SK-N-SH (cell line): ENCODE measurements at regions of chr11 and their contacts with region 1.

Region 1: GRCh38 chr11:128172046-128172878 is 415.1 kb downstream of the ETS1 start:
- DNase-seq: peak; percentile 73
- H3K4me3 ChIP-seq: no peak overlapping the region; a peak in 1 of 4 replicates
- H3K27ac ChIP-seq: peak overlapping the region in 1 of 2 experiments; percentile 50; a peak in 2 of 4 replicates
- H3K4me1 ChIP-seq: peaks cover 3 to 5% of the 10 kb centered on the region in 2 experiments; a peak in 2 of 4 replicates
- H3K27me3 ChIP-seq: no peaks in the 10 kb centered on the region
- CTCF ChIP-seq: peak; percentile 87
- EP300 ChIP-seq: no peak
- RAD21 ChIP-seq: peak; percentile 98

Region 2: DNA sequence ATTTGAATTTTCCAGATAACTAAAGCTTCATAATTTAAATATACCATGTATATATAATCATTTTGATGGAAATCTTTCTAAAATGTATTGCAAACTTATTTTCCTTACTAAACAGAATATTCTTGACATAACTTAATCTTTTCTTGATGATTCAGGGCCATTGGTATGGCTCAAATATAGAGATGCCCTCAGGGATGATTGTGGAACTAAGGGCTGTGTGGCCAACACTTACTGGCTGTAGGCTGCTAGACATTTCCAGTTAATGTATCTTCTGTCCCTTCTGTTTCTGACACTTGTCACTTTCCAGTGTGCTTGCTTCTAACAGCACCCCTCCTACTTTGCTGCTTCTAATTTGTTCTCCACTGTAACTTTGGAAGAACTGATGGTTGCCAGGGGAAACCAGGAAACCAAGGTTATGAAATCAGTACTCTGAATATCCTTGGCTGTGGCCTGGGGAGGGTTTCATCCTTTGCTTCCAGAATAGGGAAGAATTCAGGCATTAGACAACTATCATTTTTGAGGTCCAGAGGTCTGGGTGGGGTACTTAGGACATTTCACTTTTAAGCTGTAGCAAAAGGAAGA is 282.1 kb before region 1 on chr11:
- CTCF ChIA-PET with region 1: no interaction called
- POLR2A ChIA-PET with region 1: no interaction called
- DNase-seq: no peak
- H3K4me3 ChIP-seq: no peak overlapping the region
- H3K27ac ChIP-seq: no peak overlapping the region
- H3K4me1 ChIP-seq: no peaks in the 10 kb centered on the region
- H3K27me3 ChIP-seq: no peaks in the 10 kb centered on the region
- CTCF ChIP-seq: no peak
- EP300 ChIP-seq: no peak
- RAD21 ChIP-seq: no peak

Region 3: GRCh38 chr11:128095466-128095981 is 76.7 kb before region 1 on chr11:
- CTCF ChIA-PET with region 1: no interaction called
- POLR2A ChIA-PET with region 1: no interaction called
- DNase-seq: no peak
- H3K4me3 ChIP-seq: no peak overlapping the region
- H3K27ac ChIP-seq: peak overlapping the region in 1 of 2 experiments; percentile 53; a peak in 2 of 4 replicates
- H3K4me1 ChIP-seq: no peaks in the 10 kb centered on the region
- H3K27me3 ChIP-seq: no peaks in the 10 kb centered on the region
- CTCF ChIP-seq: peak; percentile 30; the same call in 1 of the 2 replicates
- EP300 ChIP-seq: no peak
- RAD21 ChIP-seq: no peak

Region 4: DNA sequence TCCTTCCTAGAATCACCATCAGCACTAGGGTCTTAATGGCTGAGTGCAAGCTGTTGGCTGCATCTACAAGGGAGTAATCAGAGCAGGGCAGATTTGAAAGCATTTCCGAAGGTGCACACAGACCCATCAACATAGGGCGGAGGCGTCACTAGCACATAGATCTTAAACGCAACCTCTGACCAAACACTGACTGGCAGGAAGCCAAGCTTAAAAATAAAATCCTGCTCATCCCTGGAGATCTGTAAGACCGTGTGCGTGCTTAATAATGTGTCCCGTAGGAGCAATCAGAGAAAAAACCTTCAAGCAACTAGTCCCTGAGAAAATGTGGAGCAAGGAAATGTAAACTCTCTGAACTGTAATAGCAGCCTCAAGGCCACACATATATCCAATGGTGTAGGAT is 55.4 kb before region 1 on chr11:
- CTCF ChIA-PET with region 1: no interaction called
- POLR2A ChIA-PET with region 1: no interaction called
- DNase-seq: no peak
- H3K4me3 ChIP-seq: no peak overlapping the region
- H3K27ac ChIP-seq: no peak overlapping the region
- H3K4me1 ChIP-seq: no peaks in the 10 kb centered on the region
- H3K27me3 ChIP-seq: no peaks in the 10 kb centered on the region
- CTCF ChIP-seq: no peak
- EP300 ChIP-seq: no peak
- RAD21 ChIP-seq: no peak

Region 5: GRCh38 chr11:128146926-128147605 is 25.2 kb before region 1 on chr11:
- CTCF ChIA-PET with region 1: interaction called, 17 read pairs
- POLR2A ChIA-PET with region 1: no interaction called
- DNase-seq: no peak
- H3K4me3 ChIP-seq: no peak overlapping the region
- H3K27ac ChIP-seq: no peak overlapping the region
- H3K4me1 ChIP-seq: peaks cover 0 to 2% of the 10 kb centered on the region in 2 experiments; a peak in 1 of 4 replicates
- H3K27me3 ChIP-seq: no peaks in the 10 kb centered on the region
- CTCF ChIP-seq: no peak
- EP300 ChIP-seq: no peak
- RAD21 ChIP-seq: no peak

Region 6: GRCh38 chr11:128624269-128625175 is 452.3 kb after region 1 on chr11:
- CTCF ChIA-PET with region 1: interaction called, 209 read pairs
- POLR2A ChIA-PET with region 1: interaction called, 4 read pairs
- DNase-seq: no peak
- H3K4me3 ChIP-seq: no peak overlapping the region
- H3K27ac ChIP-seq: no peak overlapping the region
- H3K4me1 ChIP-seq: peaks cover 0 to 22% of the 10 kb centered on the region in 2 experiments; a peak in 2 of 4 replicates
- H3K27me3 ChIP-seq: no peaks in the 10 kb centered on the region
- CTCF ChIP-seq: no peak
- EP300 ChIP-seq: no peak
- RAD21 ChIP-seq: no peak

Region 7: GRCh38 chr11:128630367-128631230 is 458.3 kb after region 1 on chr11:
- CTCF ChIA-PET with region 1: interaction called, 209 read pairs
- POLR2A ChIA-PET with region 1: interaction called, 4 read pairs
- DNase-seq: peak; percentile 83
- H3K4me3 ChIP-seq: peak overlapping the region in 1 of 2 experiments; percentile 50; a peak in 1 of 4 replicates
- H3K27ac ChIP-seq: peak overlapping the region; percentile 27 to 50; a peak in 2 of 4 replicates
- H3K4me1 ChIP-seq: peaks cover 0 to 14% of the 10 kb centered on the region in 2 experiments; a peak in 2 of 4 replicates
- H3K27me3 ChIP-seq: no peaks in the 10 kb centered on the region
- CTCF ChIP-seq: peak; percentile 97
- EP300 ChIP-seq: no peak
- RAD21 ChIP-seq: peak; percentile 98

Region 8: DNA sequence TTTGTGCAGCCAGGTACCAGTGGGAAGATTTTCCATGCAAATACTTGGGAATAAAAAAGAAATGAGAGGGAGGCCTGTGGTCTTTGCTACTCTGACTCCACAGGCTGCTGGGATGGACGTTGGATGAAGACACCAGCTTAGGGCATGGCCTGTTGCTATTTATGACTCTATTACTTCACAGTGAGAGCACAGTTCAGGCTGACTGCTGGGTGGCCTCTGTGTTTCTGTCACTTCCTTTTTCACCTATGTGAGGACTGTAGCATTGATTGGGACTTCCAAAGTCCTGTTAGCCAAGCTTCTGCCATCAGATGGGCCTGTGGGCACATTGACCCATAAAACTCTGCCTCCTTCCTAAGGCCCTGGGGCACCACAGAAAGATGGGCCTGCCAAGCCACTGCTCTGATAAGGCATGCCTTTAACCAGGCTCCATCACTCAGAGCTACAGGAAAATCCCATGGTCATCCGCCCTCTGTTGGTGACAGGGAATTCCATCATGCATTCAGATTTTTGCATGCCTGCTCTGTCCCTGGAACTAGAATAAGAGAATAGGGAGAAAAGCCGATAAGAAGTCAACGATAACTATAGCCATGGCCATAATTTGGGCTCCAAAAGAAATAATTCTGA is 630.2 kb after region 1 on chr11:
- CTCF ChIA-PET with region 1: interaction called, 19 read pairs
- POLR2A ChIA-PET with region 1: no interaction called
- DNase-seq: peak; percentile 65
- H3K4me3 ChIP-seq: peak overlapping the region in 1 of 2 experiments; percentile 40; a peak in 1 of 4 replicates
- H3K27ac ChIP-seq: peak overlapping the region in 1 of 2 experiments; percentile 41; a peak in 1 of 4 replicates
- H3K4me1 ChIP-seq: peaks cover 5 to 14% of the 10 kb centered on the region in 2 experiments; a peak in 2 of 4 replicates
- H3K27me3 ChIP-seq: no peaks in the 10 kb centered on the region
- CTCF ChIP-seq: peak; percentile 63
- EP300 ChIP-seq: no peak
- RAD21 ChIP-seq: peak; percentile 60

Region 9: DNA sequence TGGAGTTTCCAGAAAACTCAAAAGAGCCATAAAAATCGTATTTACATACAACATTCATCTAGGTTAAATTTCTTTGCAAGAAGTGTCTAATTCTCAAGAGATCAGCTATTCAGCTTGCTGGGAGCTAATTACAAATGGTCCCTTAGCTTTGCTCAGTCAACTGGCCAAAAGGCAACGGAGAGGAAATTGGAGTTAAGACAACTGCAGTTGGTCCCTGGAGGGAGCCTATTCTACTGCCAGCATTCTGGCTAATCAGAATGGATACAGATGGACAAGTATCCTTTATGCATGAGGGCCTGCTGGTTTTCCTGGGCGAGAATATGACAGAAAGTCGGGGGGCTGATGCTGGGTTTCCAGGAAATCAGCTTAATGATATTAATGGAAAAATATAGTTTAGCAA is 649.3 kb after region 1 on chr11:
- CTCF ChIA-PET with region 1: interaction called, 123 read pairs
- POLR2A ChIA-PET with region 1: no interaction called
- DNase-seq: no peak
- H3K4me3 ChIP-seq: no peak overlapping the region
- H3K27ac ChIP-seq: no peak overlapping the region
- H3K4me1 ChIP-seq: no peaks in the 10 kb centered on the region
- H3K27me3 ChIP-seq: no peaks in the 10 kb centered on the region
- CTCF ChIP-seq: no peak
- EP300 ChIP-seq: no peak
- RAD21 ChIP-seq: no peak